Posterior vena cava (tissue), 2 donors: ENCODE measurements at regions of chr19 and their contacts with region 1.

Region 1: DNA sequence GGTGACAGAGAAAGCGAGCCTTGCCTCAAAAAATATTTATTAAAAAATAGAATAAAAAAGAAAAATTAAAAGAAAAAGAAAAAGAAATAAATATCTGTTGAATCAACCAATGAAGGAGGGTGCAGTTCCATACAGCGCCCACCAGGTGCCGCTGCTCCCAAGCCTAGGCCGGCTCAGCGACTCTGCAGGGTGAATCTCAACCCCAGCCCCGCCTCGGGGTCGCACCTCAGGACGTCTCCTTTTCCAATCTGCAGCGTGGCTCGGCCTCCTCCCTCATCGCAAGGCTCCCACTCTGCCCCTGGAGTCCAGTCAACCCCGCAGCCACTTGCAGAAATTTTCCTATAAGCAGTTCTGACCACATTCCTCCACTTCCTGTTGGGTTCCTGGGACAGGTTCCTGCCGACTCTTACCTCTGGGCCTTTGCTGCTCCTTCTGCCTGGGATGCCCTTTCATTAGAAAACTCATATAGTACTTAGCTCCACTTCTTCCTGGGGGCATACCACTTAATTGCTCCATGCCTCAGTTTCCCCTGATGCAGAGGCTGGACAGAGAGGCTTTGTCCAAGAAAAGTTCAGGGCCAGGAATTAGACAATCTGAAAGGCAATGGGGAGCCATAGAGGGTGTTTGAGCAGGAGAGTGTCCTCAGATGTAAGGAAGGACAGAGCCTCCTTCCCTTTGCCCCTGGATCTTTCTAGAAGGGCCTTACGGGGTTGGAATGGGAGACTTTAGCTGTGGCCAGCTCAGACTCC is 24.3 kb downstream of the NFILZ start:
- DNase-seq: peak; percentile 92

Region 2: DNA sequence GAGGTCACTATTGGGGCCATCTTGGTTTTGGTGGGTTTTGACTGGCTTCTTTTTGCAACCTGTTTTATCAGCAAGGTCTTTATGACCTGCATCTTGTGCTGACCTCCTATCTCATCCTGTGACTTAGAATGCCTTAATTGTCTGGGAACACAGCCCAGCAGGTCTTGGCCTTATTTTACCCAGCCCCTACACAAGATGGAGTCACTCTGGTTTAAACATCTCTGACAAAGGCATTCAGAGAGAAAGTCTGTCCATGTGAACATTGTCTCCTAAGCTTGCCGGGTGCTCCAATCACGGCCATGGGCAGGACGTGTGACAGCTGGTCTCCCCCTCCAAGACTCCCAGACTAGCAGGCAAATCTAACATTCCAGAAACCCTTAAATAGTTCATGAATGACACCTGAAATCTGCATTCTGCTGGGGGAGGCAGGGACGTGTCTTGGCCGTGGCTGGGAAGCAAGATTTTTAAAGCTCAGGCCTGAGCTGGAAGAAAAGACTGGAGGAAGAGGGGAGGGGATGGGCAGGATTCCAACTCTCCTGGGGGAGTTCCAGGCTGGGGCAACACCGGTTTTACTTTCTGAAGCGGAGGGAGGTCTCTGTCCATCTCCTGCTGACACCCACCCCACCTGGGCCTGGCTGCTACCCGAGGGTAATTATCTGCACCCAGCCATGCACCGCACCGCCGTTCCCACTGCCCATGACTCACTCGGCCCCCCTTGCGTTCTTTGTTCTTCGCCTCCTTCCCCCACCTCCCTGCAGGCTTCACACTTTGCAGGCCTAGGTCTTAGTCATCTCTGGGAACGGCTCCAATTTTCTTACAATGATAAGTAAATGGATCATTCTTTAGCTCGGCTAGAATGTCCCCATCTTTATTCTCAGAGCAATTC is 420.5 kb after region 1 on chr19:
- intact Hi-C with region 1: loop called (anchors 5 kb)
- DNase-seq: peak; percentile 86